Sigmoid colon (tissue), 7 donors: ENCODE measurements at regions of chr2 and their contacts with region 1.

Region 1: GRCh38 chr2:108583903-108584520 is 49.7 kb downstream of the LIMS1 start:
- DNase-seq: peak; percentile 83
- H3K4me3 ChIP-seq: no peak overlapping the region
- H3K27ac ChIP-seq: peak overlapping the region in 3 of 4 donors; percentile 36 to 50 (median 49)
- H3K4me1 ChIP-seq: peaks cover 0 to 78% (median 70%) of the 10 kb centered on the region in 4 donors
- H3K27me3 ChIP-seq: no peaks in the 10 kb centered on the region
- CTCF ChIP-seq: peak; percentile 51 to 81 (median 78)
- EP300 ChIP-seq: no peak
- POLR2A ChIP-seq: no peak

Region 2: DNA sequence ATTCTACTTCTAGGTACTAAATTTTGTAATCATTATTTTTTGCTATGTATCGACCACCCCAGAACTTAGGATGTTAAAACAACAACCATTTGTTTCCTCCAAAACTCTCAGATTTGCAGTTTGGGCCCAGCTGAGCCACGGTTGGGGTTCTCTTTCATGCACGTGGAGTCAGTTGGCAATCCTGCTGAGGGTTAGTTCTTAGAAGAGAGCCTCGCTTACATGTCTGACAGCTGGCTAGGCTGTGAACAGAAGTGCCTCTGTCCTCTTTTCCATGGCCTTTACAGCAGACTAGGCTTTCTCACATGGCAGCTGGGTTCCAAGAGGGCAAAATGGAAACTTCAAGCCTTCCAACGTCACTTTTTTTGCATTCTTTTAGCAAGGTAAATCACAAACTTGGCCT is 766.6 kb before region 1 on chr2:
- intact Hi-C with region 1: no loop called
- DNase-seq: no peak
- H3K4me3 ChIP-seq: no peak overlapping the region
- H3K27ac ChIP-seq: no peak overlapping the region
- H3K4me1 ChIP-seq: no peaks in the 10 kb centered on the region
- H3K27me3 ChIP-seq: no peaks in the 10 kb centered on the region
- CTCF ChIP-seq: no peak
- EP300 ChIP-seq: no peak
- POLR2A ChIP-seq: no peak

Region 3: DNA sequence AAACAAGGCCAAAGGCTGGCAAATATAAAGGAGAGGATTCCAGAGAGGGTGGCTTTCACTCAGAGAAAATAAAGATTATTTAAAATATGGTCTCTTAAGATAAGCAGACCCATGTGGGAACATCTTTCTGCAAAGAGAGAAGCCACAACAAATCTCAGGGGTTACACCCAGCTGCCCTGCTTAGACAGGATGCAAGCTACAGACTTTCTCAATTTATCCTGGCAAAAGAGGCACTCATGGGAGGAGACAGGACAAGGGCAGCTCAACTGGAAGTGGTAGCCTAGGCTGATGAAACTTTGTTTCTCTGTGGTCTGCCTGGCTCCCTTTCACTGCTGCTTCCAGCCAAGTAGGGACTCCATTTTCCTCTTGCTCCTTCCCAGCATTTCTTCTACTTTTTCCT is 232.1 kb before region 1 on chr2:
- intact Hi-C with region 1: loop called (anchors 2 kb)
- DNase-seq: no peak
- H3K4me3 ChIP-seq: no peak overlapping the region
- H3K27ac ChIP-seq: no peak overlapping the region
- H3K4me1 ChIP-seq: no peaks in the 10 kb centered on the region
- H3K27me3 ChIP-seq: peaks cover 0 to 3% (median 0%) of the 10 kb centered on the region in 3 donors
- CTCF ChIP-seq: no peak
- EP300 ChIP-seq: no peak
- POLR2A ChIP-seq: no peak

Region 4: GRCh38 chr2:108448678-108449493 is 135.1 kb before region 1 on chr2 and contains the start of gene GCC2:
- intact Hi-C with region 1: loop called (anchors 2 kb)
- DNase-seq: peak; percentile 97
- H3K4me3 ChIP-seq: peak within 1 kb of the TSS; percentile 70 to 95 (median 84)
- H3K27ac ChIP-seq: peak within 1 kb of the TSS; percentile 86 to 92 (median 90)
- H3K4me1 ChIP-seq: peaks cover 0 to 18% (median 14%) of the 10 kb centered on the region in 4 donors
- H3K27me3 ChIP-seq: no peaks in the 10 kb centered on the region
- CTCF ChIP-seq: no peak
- EP300 ChIP-seq: peak in 1 of 4 donors; percentile 40
- POLR2A ChIP-seq: peak; percentile 69 to 79
- total RNA-seq, gene GCC2: 29.6 to 47.1 (median 37.2) TPM

Region 5: GRCh38 chr2:108534584-108535230 is 49.3 kb before region 1 on chr2:
- intact Hi-C with region 1: loop called (anchors 5 kb)
- DNase-seq: peak; percentile 75
- H3K4me3 ChIP-seq: peak overlapping the region; percentile 53 to 89 (median 76)
- H3K27ac ChIP-seq: peak overlapping the region; percentile 93 to 99 (median 96)
- H3K4me1 ChIP-seq: peaks cover 0 to 43% (median 35%) of the 10 kb centered on the region in 4 donors
- H3K27me3 ChIP-seq: no peaks in the 10 kb centered on the region
- CTCF ChIP-seq: no peak
- EP300 ChIP-seq: no peak
- POLR2A ChIP-seq: no peak

Region 6: GRCh38 chr2:108701208-108701607 is 117.2 kb after region 1 on chr2:
- intact Hi-C with region 1: no loop called
- DNase-seq: no peak
- H3K4me3 ChIP-seq: no peak overlapping the region
- H3K27ac ChIP-seq: no peak overlapping the region
- H3K4me1 ChIP-seq: no peaks in the 10 kb centered on the region
- H3K27me3 ChIP-seq: no peaks in the 10 kb centered on the region
- CTCF ChIP-seq: no peak
- EP300 ChIP-seq: no peak
- POLR2A ChIP-seq: no peak